H1 (cell line): ENCODE measurements at regions of chrX and their contacts with region 1.

Region 1: DNA sequence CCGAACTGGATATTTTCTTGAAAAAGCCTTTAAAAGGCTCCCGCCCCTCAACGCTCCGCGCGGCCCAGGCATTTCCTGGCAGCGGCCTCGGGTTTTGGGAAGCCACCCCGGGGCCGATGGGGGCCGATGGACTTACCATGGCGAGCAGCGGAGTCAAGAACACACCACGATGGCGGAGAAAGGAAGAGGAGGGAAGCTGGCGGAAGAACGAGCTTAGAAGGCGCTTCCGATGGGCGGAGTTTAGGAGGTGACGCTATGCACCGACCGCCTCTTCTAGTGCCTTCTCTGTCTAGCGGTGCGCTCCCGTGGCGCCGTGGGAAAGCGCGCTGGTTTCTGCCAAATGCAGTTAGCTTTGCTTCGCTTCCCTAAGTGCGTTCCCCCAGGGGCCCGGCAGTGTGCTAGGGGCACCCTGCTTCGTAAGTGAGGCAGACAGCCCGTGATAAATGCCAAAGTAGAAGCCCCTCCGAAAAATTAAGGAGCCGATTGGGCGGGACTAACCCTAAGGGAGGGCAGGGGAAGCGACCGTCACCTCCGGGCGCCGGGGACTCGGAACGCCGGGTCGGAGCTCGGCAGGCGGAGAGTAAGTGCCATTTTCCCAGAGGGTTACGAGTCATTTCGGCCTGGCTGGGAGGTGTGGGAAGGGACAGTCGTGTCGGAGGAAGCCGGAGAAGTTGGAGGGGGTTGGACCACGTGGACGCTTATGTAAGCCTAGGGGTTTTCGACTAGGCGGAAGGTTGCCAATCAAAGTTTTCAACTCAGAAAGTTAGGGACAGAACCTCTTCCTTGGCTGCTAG is at the start of gene RPL39:
- DNase-seq: peak in 1 of 2 experiments; percentile 71
- H3K4me3 ChIP-seq: peak within 1 kb of the TSS; percentile 72 to 98 (median 85)
- H3K27ac ChIP-seq: peak within 1 kb of the TSS; percentile 87
- H3K4me1 ChIP-seq: peaks cover 0 to 3% (median 0%) of the 10 kb centered on the region in 4 experiments; a peak in 1 of 7 replicates
- H3K27me3 ChIP-seq: no peaks in the 10 kb centered on the region
- CTCF ChIP-seq: no peak
- EP300 ChIP-seq: no peak
- POLR2A ChIP-seq: peak; percentile 90 to 94
- RAD21 ChIP-seq: no peak
- total RNA-seq, gene RPL39: 1,901 and 1,942 TPM in 2 replicates

Region 2: GRCh38 chrX:119693040-119693995 is 98.3 kb before region 1 on chrX and contains the start of gene SEPTIN6:
- CTCF ChIA-PET with region 1: no interaction called
- POLR2A ChIA-PET with region 1: interaction called, 10 read pairs
- DNase-seq: peak; percentile 53 to 76
- H3K4me3 ChIP-seq: peak within 1 kb of the TSS; percentile 45 to 81 (median 58)
- H3K27ac ChIP-seq: no peak within 1 kb of the TSS
- H3K4me1 ChIP-seq: peaks cover 8 to 23% (median 15%) of the 10 kb centered on the region in 4 experiments
- H3K27me3 ChIP-seq: peaks cover 0 to 10% (median 8%) of the 10 kb centered on the region in 4 experiments; a peak in 3 of 7 replicates
- CTCF ChIP-seq: no peak
- EP300 ChIP-seq: peak in 1 of 2 experiments; percentile 85; a peak in 1 of 3 replicates
- POLR2A ChIP-seq: peak in 1 of 2 experiments; percentile 32; a peak in 1 of 3 replicates
- RAD21 ChIP-seq: no peak
- total RNA-seq, gene SEPTIN6: 27.9 and 31.0 TPM in 2 replicates

Region 3: DNA sequence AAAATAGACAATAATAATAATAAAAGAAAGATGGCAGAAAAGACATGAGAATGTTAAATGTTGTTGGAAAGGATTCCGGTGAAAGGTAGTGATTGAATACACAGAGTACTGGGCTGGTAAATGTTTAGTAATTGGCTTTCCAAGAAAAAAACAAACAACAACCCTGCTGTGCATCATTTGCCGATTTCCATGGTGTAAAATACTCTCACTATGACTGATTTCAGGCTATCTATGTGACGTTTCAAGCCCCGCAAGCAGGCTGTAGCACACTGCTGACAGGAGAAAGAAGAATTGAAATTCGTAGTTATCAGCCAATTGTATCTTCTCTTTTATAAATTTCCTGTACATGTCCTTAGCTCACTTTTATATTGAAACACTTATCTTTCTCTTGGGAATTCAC is 85.0 kb before region 1 on chrX:
- CTCF ChIA-PET with region 1: no interaction called
- POLR2A ChIA-PET with region 1: no interaction called
- DNase-seq: no peak
- H3K4me3 ChIP-seq: no peak overlapping the region
- H3K27ac ChIP-seq: no peak overlapping the region
- H3K4me1 ChIP-seq: no peaks in the 10 kb centered on the region
- H3K27me3 ChIP-seq: no peaks in the 10 kb centered on the region
- CTCF ChIP-seq: no peak
- EP300 ChIP-seq: no peak
- POLR2A ChIP-seq: no peak
- RAD21 ChIP-seq: no peak

Region 4: GRCh38 chrX:119763181-119763580 is 28.5 kb before region 1 on chrX:
- CTCF ChIA-PET with region 1: interaction called, 8 read pairs
- POLR2A ChIA-PET with region 1: interaction called, 48 read pairs
- DNase-seq: no peak
- H3K4me3 ChIP-seq: no peak overlapping the region
- H3K27ac ChIP-seq: no peak overlapping the region
- H3K4me1 ChIP-seq: peaks cover 1 to 14% (median 5%) of the 10 kb centered on the region in 4 experiments; a peak in 6 of 7 replicates
- H3K27me3 ChIP-seq: peaks cover 0 to 13% (median 5%) of the 10 kb centered on the region in 4 experiments; a peak in 5 of 7 replicates
- CTCF ChIP-seq: no peak
- EP300 ChIP-seq: no peak
- POLR2A ChIP-seq: no peak
- RAD21 ChIP-seq: no peak

Region 5: DNA sequence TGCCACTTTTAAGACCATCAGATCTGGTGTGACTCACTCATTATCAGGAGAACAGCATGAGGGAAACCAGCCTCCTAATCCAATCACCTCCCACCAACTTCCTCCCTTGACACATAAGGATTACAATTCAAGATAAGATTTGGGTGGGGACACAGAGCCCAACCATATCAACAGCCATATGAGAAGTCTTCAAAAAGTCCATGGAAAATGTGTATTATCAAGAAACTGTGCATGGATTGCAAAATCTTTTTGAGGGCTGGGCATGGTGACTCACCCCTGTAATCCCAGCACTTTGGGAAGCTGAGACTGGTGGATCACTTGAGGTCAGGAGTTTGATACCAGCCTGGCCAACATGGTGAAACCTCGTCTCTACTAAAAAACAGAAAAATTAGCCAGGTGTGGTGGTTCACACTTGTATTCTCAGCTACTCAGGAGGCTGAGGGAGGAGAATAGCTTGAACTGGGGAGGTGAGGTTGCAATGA is 17.6 kb after region 1 on chrX:
- CTCF ChIA-PET with region 1: interaction called, 3 read pairs
- POLR2A ChIA-PET with region 1: interaction called, 20 read pairs
- DNase-seq: no peak
- H3K4me3 ChIP-seq: no peak overlapping the region
- H3K27ac ChIP-seq: no peak overlapping the region
- H3K4me1 ChIP-seq: no peaks in the 10 kb centered on the region
- H3K27me3 ChIP-seq: no peaks in the 10 kb centered on the region
- CTCF ChIP-seq: no peak
- EP300 ChIP-seq: no peak
- POLR2A ChIP-seq: no peak
- RAD21 ChIP-seq: no peak

Region 6: DNA sequence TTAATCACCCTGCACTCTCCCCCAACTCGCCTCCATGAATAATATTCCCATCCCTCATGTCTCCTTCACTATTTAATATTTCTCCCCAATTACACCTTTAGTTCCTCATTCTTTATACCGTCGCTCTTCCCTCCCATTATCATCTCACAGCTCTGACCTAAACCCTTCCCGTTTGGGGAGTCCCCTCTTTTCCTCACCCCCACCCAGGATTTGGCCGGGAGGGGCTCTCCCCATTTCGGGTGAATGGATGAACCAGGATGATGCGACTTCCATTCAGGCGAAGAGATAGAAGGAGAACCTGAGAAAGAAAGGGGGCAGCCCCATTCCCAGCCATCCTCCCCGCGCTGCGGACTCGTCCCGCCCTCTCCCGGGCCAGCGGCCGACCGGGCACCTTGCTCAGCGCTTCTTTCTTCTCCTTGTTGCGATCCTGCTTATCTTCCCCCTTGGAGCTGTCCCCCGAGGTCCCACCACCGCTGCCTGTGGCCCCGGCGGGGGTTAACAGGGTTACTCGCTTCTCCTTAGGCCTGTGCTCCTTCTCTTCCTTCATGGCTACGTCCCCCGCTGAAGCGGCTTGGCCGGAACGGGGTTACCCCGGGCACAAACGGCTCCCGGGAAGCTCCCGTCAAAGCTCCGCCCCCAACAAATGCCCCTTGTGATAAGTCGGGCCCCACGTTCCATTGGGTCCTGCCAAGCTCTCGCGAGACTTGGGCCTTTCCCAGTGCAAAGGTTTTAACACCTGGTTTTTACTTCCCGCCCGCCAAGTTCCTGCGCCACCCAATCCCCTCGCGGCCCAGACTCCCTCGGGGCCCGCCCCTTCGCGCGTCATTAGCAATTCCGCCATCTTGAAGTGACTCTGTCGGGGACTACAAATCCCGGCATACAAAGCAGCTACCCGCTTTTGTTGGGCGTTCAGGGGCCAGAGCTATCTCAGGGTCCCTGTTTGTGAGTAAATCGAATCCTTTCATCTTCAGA is 61.0 kb after region 1 on chrX and contains the start of gene UPF3B:
- CTCF ChIA-PET with region 1: no interaction called
- POLR2A ChIA-PET with region 1: interaction called, 29 read pairs
- DNase-seq: peak; percentile 85 to 93
- H3K4me3 ChIP-seq: peak within 1 kb of the TSS; percentile 77 to 99 (median 92)
- H3K27ac ChIP-seq: peak within 1 kb of the TSS; percentile 95
- H3K4me1 ChIP-seq: no peaks in the 10 kb centered on the region
- H3K27me3 ChIP-seq: no peaks in the 10 kb centered on the region
- CTCF ChIP-seq: no peak
- EP300 ChIP-seq: no peak
- POLR2A ChIP-seq: peak; percentile 85 to 86
- RAD21 ChIP-seq: no peak
- total RNA-seq, gene UPF3B: 20.9 and 22.2 TPM in 2 replicates

Region 7: DNA sequence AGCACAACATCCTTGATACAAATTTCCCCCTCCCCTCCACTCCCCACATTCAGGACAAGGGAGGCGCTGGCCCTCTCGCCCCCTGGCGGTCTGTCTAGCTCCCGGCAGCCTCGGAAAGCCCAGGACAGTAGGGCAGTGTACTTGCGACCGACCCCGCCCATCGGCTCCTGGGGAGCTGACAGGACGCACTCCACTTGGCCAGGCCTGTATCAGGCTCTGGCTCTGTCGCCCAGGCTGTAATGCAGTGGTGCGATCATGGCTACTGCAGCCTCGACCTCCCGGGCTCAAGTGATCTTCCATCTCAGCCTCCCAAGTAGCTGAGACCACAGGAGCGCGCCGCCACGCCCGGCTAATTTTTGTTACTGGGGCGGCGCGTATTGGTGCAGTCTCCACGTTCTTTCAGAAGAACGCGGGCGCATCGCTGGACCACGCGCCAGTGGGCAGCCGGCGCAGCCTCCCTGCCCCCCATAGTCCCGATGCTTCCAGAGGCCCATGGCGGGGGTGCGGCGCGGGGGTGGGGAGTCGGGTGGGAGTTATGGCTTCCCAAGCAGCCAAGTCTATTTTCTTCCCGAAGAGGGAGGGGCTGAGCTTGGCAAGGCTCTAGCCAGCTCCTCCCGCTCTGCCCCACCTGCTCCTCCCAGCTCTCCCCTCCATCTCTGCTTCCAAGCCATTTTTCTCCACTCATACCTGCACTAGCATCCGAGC is 96.2 kb after region 1 on chrX:
- CTCF ChIA-PET with region 1: no interaction called
- POLR2A ChIA-PET with region 1: interaction called, 12 read pairs
- DNase-seq: peak; percentile 53 to 82
- H3K4me3 ChIP-seq: peak overlapping the region; percentile 47 to 65 (median 52)
- H3K27ac ChIP-seq: no peak overlapping the region
- H3K4me1 ChIP-seq: no peaks in the 10 kb centered on the region; a peak in 1 of 7 replicates
- H3K27me3 ChIP-seq: no peaks in the 10 kb centered on the region
- CTCF ChIP-seq: peak; percentile 65 to 81 (median 80)
- EP300 ChIP-seq: no peak
- POLR2A ChIP-seq: no peak
- RAD21 ChIP-seq: peak; percentile 23 to 47; a peak in 2 of 4 replicates

Region 8: GRCh38 chrX:120334151-120334550 is 542.5 kb after region 1 on chrX:
- CTCF ChIA-PET with region 1: no interaction called
- POLR2A ChIA-PET with region 1: no interaction called
- DNase-seq: no peak
- H3K4me3 ChIP-seq: no peak overlapping the region
- H3K27ac ChIP-seq: no peak overlapping the region
- H3K4me1 ChIP-seq: peaks cover 0 to 7% (median 0%) of the 10 kb centered on the region in 4 experiments; a peak in 3 of 7 replicates
- H3K27me3 ChIP-seq: no peaks in the 10 kb centered on the region
- CTCF ChIP-seq: no peak
- EP300 ChIP-seq: no peak
- POLR2A ChIP-seq: no peak
- RAD21 ChIP-seq: no peak